Heart right ventricle (tissue), 16 donors: ENCODE measurements at regions of chr3 and their contacts with region 1.

Region 1: DNA sequence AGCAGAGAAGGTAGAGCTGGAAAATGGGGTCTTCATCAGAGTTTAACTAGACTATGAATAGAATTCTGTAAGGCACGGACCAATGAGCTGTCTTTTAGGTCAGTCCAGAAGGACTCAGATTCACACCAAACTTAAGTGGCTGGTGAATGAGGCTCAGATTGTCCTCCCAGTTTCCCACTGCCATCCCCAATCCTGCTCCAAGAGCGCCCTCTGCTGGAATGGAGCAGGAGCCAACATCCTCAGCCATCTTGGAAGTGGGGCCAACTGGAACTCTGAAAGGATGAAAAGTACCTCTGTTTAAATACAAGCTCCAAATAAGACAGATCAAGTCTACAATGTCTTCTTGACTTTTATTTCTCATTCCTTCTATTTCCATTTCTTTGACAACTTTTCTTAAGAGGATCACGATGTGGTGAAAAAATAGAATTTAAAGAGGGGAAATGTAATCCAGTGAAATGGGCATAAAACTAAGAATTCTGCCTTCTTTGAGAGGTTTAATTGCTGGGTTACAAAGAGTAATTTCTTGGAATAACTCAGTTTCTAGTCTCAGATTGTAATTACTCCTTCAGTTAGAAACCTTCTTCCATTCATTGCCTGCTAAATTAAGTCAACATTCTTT is 217.1 kb upstream of the TPRG1 start:
- DNase-seq: peak; percentile 81 to 91
- ATAC-seq: peak; percentile 75 to 90 (median 86)
- H3K4me3 ChIP-seq: no peak overlapping the region
- H3K27ac ChIP-seq: peak overlapping the region in 3 of 10 donors; percentile 9 to 71 (median 28)
- H3K4me1 ChIP-seq: peaks cover 0 to 47% (median 32%) of the 10 kb centered on the region in 9 donors
- H3K27me3 ChIP-seq: no peaks in the 10 kb centered on the region
- CTCF ChIP-seq: peak in 8 of 9 donors; percentile 81 to 98 (median 96)

Region 2: DNA sequence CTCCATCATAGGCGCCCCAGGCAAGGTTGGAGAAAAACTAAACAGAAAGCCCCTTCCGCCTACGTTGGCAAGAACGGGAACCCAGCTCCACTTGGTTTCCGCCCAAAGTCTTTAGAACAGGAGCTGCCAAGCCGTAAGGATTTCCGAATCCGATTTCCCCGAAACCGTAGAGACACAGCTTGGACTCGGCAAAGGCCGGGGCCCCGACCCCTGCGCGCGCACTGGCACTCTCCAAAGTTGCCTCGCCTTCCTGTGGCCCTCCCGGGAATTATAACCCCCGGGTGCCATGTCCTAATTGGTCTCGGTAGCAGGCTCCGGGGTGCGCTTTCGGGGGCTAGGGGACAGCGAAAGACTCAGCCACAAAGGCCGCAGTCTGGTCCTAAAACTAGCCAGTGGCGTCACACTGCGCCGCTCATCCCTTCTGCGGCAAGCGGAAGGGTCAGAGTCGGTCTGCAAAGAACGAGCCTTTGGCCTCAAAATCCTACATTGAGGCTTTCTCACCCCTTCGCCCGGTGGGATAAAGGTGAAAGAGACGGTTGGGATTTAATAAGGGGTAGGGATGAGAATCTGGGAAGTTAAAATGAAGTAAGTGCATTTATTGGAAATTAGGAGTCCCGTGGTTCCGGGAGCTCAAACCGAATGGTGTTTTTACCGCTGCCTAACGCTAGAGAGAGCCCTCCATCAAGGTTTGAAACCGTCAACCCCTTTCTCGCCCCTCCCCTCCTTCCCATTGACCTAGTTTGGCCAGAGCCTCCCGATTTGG is 1216.2 kb before region 1 on chr3:
- intact Hi-C with region 1: loop called in 9 of 10 experiments (anchors 1 to 5 kb)
- DNase-seq: peak; percentile 75 to 97
- ATAC-seq: peak; percentile 60 to 82 (median 75)
- H3K4me3 ChIP-seq: peak overlapping the region; percentile 46 to 95 (median 73)
- H3K27ac ChIP-seq: peak overlapping the region; percentile 85 to 100 (median 99)
- H3K4me1 ChIP-seq: peaks cover 4 to 72% (median 38%) of the 10 kb centered on the region in 9 donors
- H3K27me3 ChIP-seq: no peaks in the 10 kb centered on the region
- CTCF ChIP-seq: peak; percentile 32 to 86 (median 73)

Region 3: GRCh38 chr3:188052169-188053030 is 902.3 kb before region 1 on chr3:
- intact Hi-C with region 1: loop called in 6 of 10 experiments (anchors 5 to 10 kb)
- DNase-seq: peak; percentile 81 to 89
- ATAC-seq: peak; percentile 96 to 98 (median 97)
- H3K4me3 ChIP-seq: peak overlapping the region in 6 of 10 donors; percentile 3 to 34 (median 23)
- H3K27ac ChIP-seq: peak overlapping the region; percentile 66 to 89 (median 76)
- H3K4me1 ChIP-seq: peaks cover 6 to 34% (median 21%) of the 10 kb centered on the region in 9 donors
- H3K27me3 ChIP-seq: no peaks in the 10 kb centered on the region
- CTCF ChIP-seq: peak in 8 of 9 donors; percentile 26 to 77 (median 56)

Region 4: DNA sequence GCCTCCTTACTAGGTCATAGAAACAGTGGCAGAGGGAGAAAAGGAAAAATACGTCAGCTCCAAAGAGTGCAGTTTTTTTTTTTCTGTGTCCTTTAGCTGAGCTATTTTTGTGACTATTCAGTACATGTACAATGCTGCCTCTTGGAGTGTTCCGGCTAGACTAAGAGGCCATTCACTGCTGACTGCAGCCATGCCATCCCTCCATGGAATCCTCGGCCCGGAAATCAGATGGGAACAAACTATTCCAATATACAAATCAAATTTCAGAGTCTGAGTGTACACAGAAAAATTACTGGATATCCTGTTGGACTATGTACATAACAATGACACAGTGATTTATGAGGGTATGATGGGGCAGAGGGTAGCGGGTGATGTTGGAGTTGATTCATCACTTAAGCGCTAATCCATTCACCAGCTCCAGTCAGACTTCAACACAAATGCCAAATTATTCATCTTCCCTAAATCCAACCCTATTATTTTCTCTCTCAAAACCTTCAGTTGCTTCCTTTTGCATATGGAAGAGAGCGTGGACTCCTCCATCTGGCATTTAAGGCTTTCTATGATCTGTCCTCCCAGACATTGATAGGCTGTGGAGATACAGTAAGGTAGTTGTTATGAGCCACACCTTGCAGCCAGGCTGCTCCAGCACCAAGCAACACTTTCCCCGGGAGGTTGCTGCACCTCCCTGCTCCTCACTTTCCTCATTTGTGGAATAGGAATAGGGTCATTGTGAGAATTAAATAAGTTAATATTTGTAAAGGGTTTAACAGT is 691.6 kb before region 1 on chr3:
- intact Hi-C with region 1: loop called in 3 of 10 experiments (anchors 2 to 10 kb)
- DNase-seq: peak in 1 of 2 donors; percentile 62
- ATAC-seq: peak; percentile 50 to 89 (median 84)
- H3K4me3 ChIP-seq: no peak overlapping the region
- H3K27ac ChIP-seq: peak overlapping the region; percentile 73 to 93 (median 86)
- H3K4me1 ChIP-seq: peaks cover 26 to 98% (median 74%) of the 10 kb centered on the region in 9 donors
- H3K27me3 ChIP-seq: no peaks in the 10 kb centered on the region
- CTCF ChIP-seq: no peak

Region 5: GRCh38 chr3:188339410-188340295 is 615.0 kb before region 1 on chr3:
- intact Hi-C with region 1: loop called in 3 of 10 experiments (anchors 2 to 10 kb)
- DNase-seq: no peak
- ATAC-seq: no peak
- H3K4me3 ChIP-seq: no peak overlapping the region
- H3K27ac ChIP-seq: peak overlapping the region in 6 of 10 donors; percentile 2 to 33 (median 10)
- H3K4me1 ChIP-seq: peaks cover 0 to 55% (median 26%) of the 10 kb centered on the region in 9 donors
- H3K27me3 ChIP-seq: no peaks in the 10 kb centered on the region
- CTCF ChIP-seq: no peak

Region 6: DNA sequence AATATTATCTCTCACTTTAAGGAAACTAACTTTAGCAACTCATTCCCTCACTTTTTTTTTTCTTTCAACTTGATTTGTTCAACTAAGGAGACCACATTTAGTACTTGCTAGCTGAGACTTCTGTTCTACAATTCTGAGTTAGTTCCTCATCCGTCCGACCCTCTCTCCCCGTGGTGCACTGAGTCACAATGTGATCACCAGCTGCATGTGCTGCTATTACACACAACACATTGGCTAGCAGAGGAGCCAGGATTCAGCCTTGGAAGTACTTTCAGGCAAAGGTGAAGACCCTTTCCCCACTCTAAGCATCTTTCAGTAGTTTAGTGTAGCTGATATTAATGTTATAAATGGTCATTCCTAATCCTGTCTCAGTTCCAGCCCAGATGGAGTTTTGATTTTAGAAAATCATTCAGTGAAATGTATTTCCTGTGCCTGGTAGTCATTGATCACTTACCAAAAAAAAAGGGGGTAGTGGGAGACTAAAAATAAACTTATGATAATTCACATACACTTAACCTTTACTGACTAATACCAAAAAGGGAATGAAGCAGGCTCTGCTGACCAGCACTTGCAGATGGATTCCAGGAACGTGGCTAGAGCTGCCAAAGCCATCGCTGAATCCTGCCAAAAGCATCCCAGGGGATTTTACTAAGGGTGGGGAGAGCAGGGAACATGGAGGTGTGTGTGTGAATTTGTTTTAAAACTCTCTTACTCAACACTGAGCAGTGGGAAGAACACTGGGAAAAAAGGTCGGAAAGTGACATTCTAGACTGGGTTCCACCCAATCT is 375.9 kb before region 1 on chr3:
- intact Hi-C with region 1: loop called in 1 of 10 experiments (anchors 5 kb)
- DNase-seq: peak; percentile 34 to 86
- ATAC-seq: peak; percentile 92 to 97 (median 95)
- H3K4me3 ChIP-seq: no peak overlapping the region
- H3K27ac ChIP-seq: peak overlapping the region in 9 of 10 donors; percentile 14 to 82 (median 77)
- H3K4me1 ChIP-seq: peaks cover 3 to 69% (median 33%) of the 10 kb centered on the region in 9 donors
- H3K27me3 ChIP-seq: no peaks in the 10 kb centered on the region
- CTCF ChIP-seq: no peak

Region 7: GRCh38 chr3:189013224-189013888 is 58.7 kb after region 1 on chr3:
- intact Hi-C with region 1: no loop called
- DNase-seq: no peak
- ATAC-seq: no peak
- H3K4me3 ChIP-seq: no peak overlapping the region
- H3K27ac ChIP-seq: no peak overlapping the region
- H3K4me1 ChIP-seq: no peaks in the 10 kb centered on the region
- H3K27me3 ChIP-seq: no peaks in the 10 kb centered on the region
- CTCF ChIP-seq: no peak